ENCODE measurements at regions of chr2 and their contacts with region 1.

Region 1: DNA sequence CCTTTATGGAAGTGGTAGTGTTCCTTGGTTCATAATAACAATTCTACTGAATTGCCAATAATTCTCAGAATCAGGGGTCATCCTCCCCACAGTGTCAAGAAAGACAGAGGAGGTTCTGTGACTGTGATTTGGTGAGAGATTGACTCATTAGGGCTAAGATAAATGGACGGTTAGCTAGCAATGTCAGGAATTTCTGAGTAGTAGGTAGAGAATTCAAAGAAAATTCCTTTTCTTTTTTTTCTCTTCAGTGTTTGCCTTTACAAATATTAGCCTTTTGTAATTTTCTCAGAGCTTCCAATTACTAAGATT is 16.8 kb upstream of the CRIM1 start:
- DNase-seq: no peak
- H3K4me3 Mint-ChIP-seq: no peak overlapping the region
- H3K27ac Mint-ChIP-seq: no peak overlapping the region
- H3K4me1 Mint-ChIP-seq: peaks cover 5% of the 10 kb centered on the region
- H3K27me3 Mint-ChIP-seq: peaks cover 11% of the 10 kb centered on the region

Region 2: GRCh38 chr2:36044411-36044810 is 294.4 kb before region 1 on chr2:
- CTCF ChIA-PET with region 1: no interaction called
- intact Hi-C with region 1: no loop called
- DNase-seq: no peak
- H3K4me3 Mint-ChIP-seq: no peak overlapping the region
- H3K27ac Mint-ChIP-seq: no peak overlapping the region
- H3K4me1 Mint-ChIP-seq: no peaks in the 10 kb centered on the region
- H3K27me3 Mint-ChIP-seq: peaks cover 11% of the 10 kb centered on the region

Region 3: GRCh38 chr2:36123995-36124394 is 214.8 kb before region 1 on chr2:
- CTCF ChIA-PET with region 1: no interaction called
- intact Hi-C with region 1: loop called (anchors 1 kb)
- DNase-seq: no peak
- H3K4me3 Mint-ChIP-seq: no peak overlapping the region
- H3K27ac Mint-ChIP-seq: no peak overlapping the region
- H3K4me1 Mint-ChIP-seq: peaks cover 11% of the 10 kb centered on the region
- H3K27me3 Mint-ChIP-seq: peaks cover 19% of the 10 kb centered on the region

Region 4: GRCh38 chr2:36163520-36164239 is 175.1 kb before region 1 on chr2:
- CTCF ChIA-PET with region 1: no interaction called
- intact Hi-C with region 1: loop called (anchors 5 kb)
- DNase-seq: no peak
- H3K4me3 Mint-ChIP-seq: no peak overlapping the region
- H3K27ac Mint-ChIP-seq: no peak overlapping the region
- H3K4me1 Mint-ChIP-seq: no peaks in the 10 kb centered on the region
- H3K27me3 Mint-ChIP-seq: peaks cover 8% of the 10 kb centered on the region

Region 5: DNA sequence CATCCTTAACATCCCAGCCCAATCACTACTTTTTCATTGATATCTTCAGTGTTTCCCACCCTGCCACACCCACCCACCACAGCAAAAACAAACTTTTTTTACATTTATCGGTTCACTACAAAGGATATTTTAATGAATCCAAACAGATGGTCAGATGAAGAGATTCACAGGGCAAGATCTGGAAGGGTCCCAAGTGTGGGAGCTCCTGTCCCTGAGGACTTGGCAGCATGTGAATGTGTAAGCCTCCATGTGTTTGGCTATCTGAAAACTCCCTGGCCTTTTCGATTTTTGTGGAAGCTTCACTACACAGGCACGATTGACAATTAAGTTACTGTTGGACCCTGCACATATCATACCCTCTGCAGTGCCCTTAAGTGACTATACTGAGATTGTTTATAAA is 31.3 kb before region 1 on chr2:
- CTCF ChIA-PET with region 1: interaction called, 4 read pairs
- intact Hi-C with region 1: loop called (anchors 2 kb)
- DNase-seq: no peak
- H3K4me3 Mint-ChIP-seq: no peak overlapping the region
- H3K27ac Mint-ChIP-seq: no peak overlapping the region
- H3K4me1 Mint-ChIP-seq: peaks cover 23% of the 10 kb centered on the region
- H3K27me3 Mint-ChIP-seq: peaks cover 3% of the 10 kb centered on the region

Measured in activated naive CD4-positive, alpha-beta T cell treated with anti-CD3 and anti-CD28 coated beads for 36 hours (primary cell).